Activated CD4-positive, alpha-beta T cell treated with anti-CD3 and anti-CD28 coated beads for 36 hours (primary cell): ENCODE measurements at regions of chr9 and their contacts with region 1.

Region 1: DNA sequence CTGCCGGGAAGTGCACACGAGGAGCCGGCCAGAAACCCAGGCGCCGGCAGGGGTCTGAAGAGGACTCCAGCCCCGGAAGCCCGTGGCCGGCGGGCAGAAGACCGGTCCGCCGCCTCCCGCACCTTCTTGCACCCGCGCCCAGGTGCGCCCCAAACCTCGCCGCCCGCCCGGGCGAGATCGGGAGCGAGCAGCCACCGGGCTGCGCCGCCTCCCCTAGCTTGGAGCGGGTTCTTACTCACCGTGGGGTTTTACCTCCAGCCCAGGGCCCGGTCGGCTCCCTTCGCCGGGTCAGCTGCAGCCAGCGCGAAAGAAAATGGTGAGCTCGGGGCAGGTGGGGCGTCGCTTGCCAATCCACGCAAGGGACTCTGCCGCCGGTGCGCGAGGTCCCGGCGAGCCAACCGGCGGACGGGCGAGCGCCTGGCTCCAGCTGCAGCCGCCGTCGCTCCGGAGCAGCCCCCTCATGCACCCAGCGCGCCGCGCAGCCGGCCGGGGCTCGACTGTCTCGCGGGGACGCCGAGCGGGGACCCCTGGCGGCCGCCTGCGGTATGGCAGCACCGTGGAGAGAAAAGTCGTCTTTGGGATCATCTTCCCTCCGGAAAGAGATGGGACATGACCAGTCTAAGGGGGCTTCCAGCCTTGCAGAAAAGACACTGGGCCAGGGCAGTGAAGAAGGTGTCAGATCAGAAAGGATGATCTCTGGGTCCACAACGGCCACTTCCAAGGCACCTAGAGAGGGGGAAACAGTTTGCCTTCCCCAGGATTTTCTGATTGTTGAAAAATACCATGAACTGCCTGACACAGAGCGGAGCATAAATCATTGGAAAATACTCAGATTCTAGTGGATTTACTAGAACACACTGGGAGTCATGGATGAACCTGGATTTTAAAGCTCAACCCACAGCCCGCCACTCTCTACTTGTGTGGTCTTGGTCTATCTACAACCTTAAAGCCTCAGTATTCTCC is at the start of gene MOB3B:
- DNase-seq: peak; percentile 88
- ATAC-seq: peak; percentile 81
- H3K4me3 Mint-ChIP-seq: peak within 1 kb of the TSS; percentile 82
- H3K27ac Mint-ChIP-seq: peak within 1 kb of the TSS; percentile 72
- H3K4me1 Mint-ChIP-seq: peaks cover 9% of the 10 kb centered on the region
- H3K27me3 Mint-ChIP-seq: peaks cover 15% of the 10 kb centered on the region
- total RNA-seq, gene MOB3B: 0.80 to 0.88 TPM

Region 2: DNA sequence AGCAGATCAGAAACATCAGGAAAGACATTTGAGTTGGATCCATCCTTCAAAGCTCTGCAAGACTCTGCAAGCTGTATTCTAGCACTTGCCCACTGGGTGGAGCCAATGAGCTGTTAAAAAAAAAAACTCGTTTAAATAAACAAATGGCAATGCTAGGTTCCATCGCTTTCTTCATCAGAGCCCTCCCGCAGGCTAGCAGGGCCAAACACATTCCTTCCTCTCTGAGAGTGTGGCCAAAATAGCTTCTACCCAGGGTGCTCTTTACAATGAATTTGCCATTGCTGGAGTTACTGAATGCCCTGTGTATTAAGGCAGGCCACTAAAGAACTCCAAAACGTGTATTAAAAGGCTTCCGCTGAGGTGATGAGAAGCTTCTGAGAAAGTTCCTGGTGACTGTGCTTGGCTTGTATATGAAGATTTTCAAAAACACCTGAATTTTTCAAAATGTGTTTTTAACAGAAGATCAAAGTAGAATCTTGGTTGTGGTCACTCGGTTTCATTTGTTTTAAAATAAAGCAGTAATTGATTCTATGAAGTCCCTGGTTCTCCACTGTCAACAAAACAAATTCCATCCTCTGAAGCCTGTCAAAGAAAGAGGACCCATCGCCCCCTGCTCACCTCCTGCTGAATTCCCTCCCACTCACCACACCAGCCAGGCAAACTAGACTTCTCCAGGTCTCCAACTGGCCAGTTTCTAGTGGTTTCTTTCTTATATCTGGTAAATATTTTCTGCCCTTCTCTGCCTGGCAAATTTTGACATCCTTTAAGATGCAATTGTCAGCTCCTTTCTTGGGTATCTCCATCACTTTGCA is 196.2 kb before region 1 on chr9:
- CTCF ChIA-PET with region 1: interaction called, 35 read pairs
- POLR2A ChIA-PET with region 1: no interaction called
- intact Hi-C with region 1: loop called (anchors 1 kb)
- DNase-seq: peak; percentile 51
- ATAC-seq: peak; percentile 68
- H3K4me3 Mint-ChIP-seq: no peak overlapping the region
- H3K27ac Mint-ChIP-seq: no peak overlapping the region
- H3K4me1 Mint-ChIP-seq: no peaks in the 10 kb centered on the region
- H3K27me3 Mint-ChIP-seq: peaks cover 2% of the 10 kb centered on the region

Region 3: GRCh38 chr9:27499481-27499880 is 30.1 kb before region 1 on chr9:
- CTCF ChIA-PET with region 1: interaction called, 3 read pairs
- POLR2A ChIA-PET with region 1: interaction called, 3 read pairs
- intact Hi-C with region 1: loop called in 1 of 2 experiments (anchors 2 kb)
- DNase-seq: no peak
- ATAC-seq: peak; percentile 90
- H3K4me3 Mint-ChIP-seq: no peak overlapping the region
- H3K27ac Mint-ChIP-seq: no peak overlapping the region
- H3K4me1 Mint-ChIP-seq: peaks cover 19% of the 10 kb centered on the region
- H3K27me3 Mint-ChIP-seq: peaks cover 2% of the 10 kb centered on the region

Region 4: DNA sequence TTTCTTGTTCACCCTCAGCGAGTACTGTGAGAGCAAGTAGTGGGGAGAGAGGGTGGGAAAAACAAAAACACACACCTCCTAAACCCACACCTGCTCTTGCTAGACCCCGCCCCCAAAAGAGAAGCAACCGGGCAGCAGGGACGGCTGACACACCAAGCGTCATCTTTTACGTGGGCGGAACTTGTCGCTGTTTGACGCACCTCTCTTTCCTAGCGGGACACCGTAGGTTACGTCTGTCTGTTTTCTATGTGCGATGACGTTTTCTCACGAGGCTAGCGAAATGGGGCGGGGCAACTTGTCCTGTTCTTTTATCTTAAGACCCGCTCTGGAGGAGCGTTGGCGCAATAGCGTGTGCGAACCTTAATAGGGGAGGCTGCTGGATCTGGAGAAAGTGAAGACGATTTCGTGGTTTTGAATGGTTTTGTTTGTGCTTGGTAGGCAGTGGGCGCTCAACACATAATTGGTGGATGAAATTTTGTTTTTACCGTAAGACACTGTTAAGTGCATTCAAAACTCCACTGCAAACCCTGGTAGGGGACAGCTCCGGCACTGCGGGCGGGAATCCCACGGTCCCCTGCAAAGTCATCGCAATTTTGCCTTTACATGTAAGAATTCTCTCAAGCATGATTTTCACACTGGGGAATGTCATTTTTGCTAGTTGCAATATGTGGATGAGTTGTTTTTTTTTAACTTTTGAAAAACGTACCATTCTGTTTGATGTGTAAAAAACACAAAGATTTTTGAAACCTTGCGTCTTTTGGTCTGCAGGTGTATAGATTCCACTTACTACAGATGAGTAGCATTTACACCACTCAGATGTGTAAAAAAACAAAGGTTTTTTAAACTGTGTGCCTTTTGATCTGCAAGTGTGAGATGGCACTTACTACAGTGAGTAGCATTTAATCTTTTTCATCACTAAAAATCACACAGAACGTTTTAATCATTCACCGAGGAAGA is 44.3 kb after region 1 on chr9:
- CTCF ChIA-PET with region 1: interaction called, 5 read pairs
- POLR2A ChIA-PET with region 1: no interaction called
- intact Hi-C with region 1: loop called (anchors 1 to 2 kb)
- DNase-seq: peak; percentile 98
- ATAC-seq: peak; percentile 72
- H3K4me3 Mint-ChIP-seq: peak overlapping the region; percentile 88
- H3K27ac Mint-ChIP-seq: peak overlapping the region; percentile 100
- H3K4me1 Mint-ChIP-seq: peaks cover 32% of the 10 kb centered on the region
- H3K27me3 Mint-ChIP-seq: no peaks in the 10 kb centered on the region

Region 5: DNA sequence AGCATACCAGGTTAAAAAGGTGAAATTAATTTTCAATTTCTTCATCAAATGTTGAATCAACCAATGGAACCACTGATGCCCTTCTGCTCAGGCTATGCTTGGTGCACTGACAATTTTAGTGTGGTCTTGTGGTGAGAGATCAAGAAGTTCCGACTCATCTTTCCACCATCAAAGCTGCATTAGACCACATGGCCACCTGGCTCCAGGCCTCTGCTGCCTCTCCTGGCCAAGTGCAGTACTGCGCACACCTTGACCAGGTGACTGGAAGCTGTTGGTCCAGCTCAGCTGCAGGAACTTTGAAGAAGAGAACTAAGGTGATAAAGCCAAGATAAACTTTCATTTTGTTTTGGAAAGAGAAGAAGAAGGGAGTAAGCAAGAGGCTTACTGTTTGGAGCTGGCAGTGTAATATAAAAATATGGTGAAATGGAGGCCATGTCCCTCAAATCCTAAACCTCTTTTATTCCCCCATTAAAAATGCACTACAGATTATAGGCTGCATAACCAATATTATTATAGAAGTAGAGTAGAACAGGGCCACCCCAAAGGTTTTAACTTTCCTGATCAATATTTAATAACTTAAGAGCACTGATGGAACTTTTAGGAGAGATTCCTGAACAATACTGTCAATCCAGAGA is 359.2 kb after region 1 on chr9:
- CTCF ChIA-PET with region 1: no interaction called
- POLR2A ChIA-PET with region 1: no interaction called
- intact Hi-C with region 1: loop called in 1 of 2 experiments (anchors 10 kb)
- DNase-seq: peak; percentile 74
- ATAC-seq: peak; percentile 61
- H3K4me3 Mint-ChIP-seq: no peak overlapping the region
- H3K27ac Mint-ChIP-seq: no peak overlapping the region
- H3K4me1 Mint-ChIP-seq: no peaks in the 10 kb centered on the region
- H3K27me3 Mint-ChIP-seq: peaks cover 2% of the 10 kb centered on the region